ENCODE measurements at regions of chr1 and their contacts with region 1.

Region 1: DNA sequence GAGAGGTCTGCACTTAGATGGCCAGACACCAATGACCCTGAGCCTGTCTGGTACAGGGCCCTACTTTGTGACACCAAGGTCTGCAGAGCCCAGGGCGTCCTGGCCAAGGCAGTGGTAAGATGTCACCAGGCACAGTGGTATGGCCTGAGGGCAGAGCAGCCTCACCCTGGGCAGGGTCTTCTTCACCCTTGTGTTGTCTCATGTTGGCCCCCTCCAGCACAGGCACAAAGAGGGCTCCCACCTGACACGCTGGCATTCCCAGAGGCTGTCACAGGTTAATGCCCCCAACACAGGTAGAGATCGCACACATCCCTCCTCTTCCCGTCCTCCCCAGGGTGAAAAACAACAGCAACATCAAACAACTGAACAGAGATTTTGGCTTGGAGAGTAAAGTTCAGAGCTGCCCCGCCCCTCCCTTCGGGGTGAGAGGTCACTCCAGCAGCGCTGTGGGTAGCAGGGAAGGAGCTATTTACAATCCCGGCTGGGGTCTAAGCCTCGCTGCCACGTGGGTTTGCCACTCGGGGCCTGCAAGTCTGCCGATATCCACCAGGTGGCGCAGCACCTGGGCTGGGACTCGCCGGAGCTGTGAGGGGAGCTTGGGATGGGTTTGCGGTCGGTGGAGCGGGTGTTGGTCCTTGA is 12.6 kb downstream of the EFNA3 start:
- DNase-seq: peak; percentile 73
- H3K4me3 ChIP-seq: no peak overlapping the region
- H3K27ac ChIP-seq: no peak overlapping the region
- H3K4me1 ChIP-seq: no peaks in the 10 kb centered on the region
- H3K27me3 ChIP-seq: peaks cover 9% of the 10 kb centered on the region

Region 2: DNA sequence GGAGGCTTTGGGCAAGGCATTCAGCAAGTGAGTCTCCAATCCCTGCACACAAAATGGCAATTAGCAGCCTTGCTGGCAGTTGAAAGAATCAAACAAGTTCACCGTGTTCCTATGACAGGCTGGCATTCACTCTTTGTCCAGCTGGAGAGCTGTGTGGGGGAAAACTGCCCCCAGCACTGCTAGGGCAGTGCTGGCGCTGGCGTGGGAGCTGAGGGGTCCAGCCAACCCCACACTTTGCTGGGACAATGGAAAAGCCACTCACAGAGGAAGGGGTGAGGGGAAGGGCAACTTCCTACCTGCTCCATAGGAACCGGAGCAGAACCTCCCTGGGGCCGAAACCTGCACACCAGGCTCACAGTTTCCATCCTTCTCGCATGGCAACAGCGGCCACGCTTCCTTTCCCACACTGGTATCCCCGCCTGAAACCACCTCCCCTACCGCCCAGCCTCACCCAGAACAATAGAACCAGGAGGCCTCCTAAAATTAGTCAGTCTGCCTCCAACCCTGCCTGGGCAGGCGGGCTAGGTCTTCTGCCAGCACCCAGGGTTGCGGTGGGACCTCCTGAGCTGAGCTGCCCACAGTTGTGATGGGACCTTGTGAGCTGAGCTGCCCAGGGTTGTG is 194.3 kb before region 1 on chr1:
- in situ Hi-C with region 1: no loop called
- DNase-seq: no peak
- H3K4me3 ChIP-seq: no peak overlapping the region
- H3K27ac ChIP-seq: no peak overlapping the region
- H3K4me1 ChIP-seq: no peaks in the 10 kb centered on the region
- H3K27me3 ChIP-seq: peaks cover 26% of the 10 kb centered on the region

Region 3: GRCh38 chr1:155167166-155168104 is 76.2 kb after region 1 on chr1:
- in situ Hi-C with region 1: loop called (anchors 5 kb)
- DNase-seq: peak; percentile 86
- H3K4me3 ChIP-seq: no peak overlapping the region
- H3K27ac ChIP-seq: no peak overlapping the region
- H3K4me1 ChIP-seq: peaks cover 11% of the 10 kb centered on the region
- H3K27me3 ChIP-seq: no peaks in the 10 kb centered on the region

Region 4: GRCh38 chr1:155455588-155456195 is 364.5 kb after region 1 on chr1:
- in situ Hi-C with region 1: no loop called
- DNase-seq: peak; percentile 76
- H3K4me3 ChIP-seq: no peak overlapping the region
- H3K27ac ChIP-seq: peak overlapping the region; percentile 57
- H3K4me1 ChIP-seq: peaks cover 24% of the 10 kb centered on the region
- H3K27me3 ChIP-seq: no peaks in the 10 kb centered on the region

Region 5: DNA sequence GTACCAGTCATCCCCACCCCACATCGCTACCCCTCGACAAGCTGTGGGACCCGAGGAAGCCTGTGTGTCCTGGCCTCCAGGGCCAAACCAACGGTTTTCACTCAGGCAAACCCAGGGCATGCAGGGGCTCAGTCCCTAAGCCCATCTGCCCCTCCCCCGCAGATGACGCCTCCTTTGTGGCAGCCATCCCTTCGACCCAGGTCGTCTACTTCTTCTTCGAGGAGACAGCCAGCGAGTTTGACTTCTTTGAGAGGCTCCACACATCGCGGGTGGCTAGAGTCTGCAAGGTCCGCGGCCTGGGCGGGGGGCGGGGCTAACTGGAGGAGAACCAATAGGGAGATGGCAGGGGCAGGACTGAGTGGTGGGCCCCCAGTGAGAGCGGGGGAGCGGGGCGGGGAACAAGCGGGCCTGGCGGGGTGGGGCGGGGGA is 1069.6 kb after region 1 on chr1:
- in situ Hi-C with region 1: no loop called
- DNase-seq: peak; percentile 79
- H3K4me3 ChIP-seq: peak overlapping the region; percentile 55
- H3K27ac ChIP-seq: no peak overlapping the region
- H3K4me1 ChIP-seq: no peaks in the 10 kb centered on the region
- H3K27me3 ChIP-seq: no peaks in the 10 kb centered on the region